Calu3 (cell line): ENCODE measurements at regions of chrX and their contacts with region 1.

Region 1: DNA sequence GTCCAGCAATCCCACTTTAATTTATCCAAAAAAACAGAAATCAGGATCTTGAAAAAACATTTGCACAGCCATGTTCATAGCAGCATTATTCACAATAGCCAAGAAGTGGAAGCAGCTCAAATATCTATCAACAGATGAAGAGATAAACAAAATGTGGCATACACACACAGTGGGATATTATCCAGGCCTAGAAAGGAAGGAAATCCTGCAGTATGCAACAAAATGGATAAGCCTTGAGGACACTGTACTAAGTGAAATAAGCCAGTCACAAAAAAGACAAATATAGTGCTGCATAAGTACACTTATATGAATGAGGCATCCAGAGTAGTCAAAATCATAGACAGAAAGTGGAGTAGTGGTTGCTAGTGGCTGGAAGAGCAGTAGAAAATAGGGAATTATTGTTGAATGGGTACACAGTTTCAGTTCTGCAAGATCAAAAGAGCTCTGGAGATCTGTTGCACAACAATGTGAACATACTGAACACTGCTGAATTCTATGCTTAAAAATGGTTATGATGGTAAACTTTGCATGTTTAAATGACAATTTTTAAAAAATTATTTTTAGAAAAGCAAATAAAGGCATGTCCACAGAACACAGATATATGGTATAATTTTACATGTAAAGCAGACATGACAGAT is 25.6 kb downstream of the CHM start:
- DNase-seq: no peak
- H3K4me3 Mint-ChIP-seq: no peak overlapping the region
- H3K27ac Mint-ChIP-seq: no peak overlapping the region
- H3K4me1 Mint-ChIP-seq: no peaks in the 10 kb centered on the region
- H3K27me3 Mint-ChIP-seq: no peaks in the 10 kb centered on the region
- CTCF ChIP-seq: no peak

Region 2: DNA sequence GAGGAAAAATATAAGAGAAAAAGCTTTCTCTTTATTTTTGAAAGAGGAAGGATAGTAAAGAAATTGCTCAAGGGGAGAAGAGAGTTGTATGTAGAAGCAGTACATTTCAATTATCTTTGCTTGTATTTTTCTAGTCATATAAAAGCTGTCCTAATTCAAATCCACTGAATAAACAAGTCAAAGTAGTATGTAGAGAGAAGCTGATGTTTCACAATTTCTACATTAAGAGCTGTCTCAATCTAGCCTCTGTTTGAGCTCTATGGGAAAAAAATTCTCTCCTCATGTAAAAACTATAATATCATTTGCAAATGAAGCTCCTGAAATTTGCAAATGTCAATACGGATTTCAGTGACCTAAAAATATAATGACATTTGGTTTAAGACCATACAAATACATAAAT is 27.0 kb before region 1 on chrX:
- CTCF ChIA-PET with region 1: interaction called, 10 read pairs
- intact Hi-C with region 1: no loop called
- DNase-seq: no peak
- H3K4me3 Mint-ChIP-seq: no peak overlapping the region
- H3K27ac Mint-ChIP-seq: no peak overlapping the region
- H3K4me1 Mint-ChIP-seq: peaks cover 24% of the 10 kb centered on the region
- H3K27me3 Mint-ChIP-seq: no peaks in the 10 kb centered on the region
- CTCF ChIP-seq: no peak

Region 3: DNA sequence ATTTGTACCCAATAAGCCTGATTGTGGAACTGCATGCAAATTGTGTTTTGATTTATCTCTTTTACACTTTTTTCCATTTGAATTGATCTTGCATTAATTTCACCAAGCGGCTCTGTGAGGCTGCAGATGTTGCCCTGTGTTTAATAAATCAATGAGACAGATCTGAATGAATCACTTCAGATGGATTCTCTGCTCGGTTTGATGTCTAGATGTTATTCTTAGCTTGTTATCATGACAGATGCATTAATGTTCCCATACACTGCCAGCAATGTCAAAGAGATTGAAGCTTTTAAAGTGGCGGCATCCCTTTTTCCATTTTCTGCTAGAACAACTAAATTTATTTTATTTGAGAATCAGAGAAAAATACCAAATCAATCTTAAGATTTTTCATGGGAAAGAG is 132.8 kb after region 1 on chrX:
- CTCF ChIA-PET with region 1: no interaction called
- intact Hi-C with region 1: no loop called
- DNase-seq: no peak
- H3K4me3 Mint-ChIP-seq: no peak overlapping the region
- H3K27ac Mint-ChIP-seq: no peak overlapping the region
- H3K4me1 Mint-ChIP-seq: no peaks in the 10 kb centered on the region
- H3K27me3 Mint-ChIP-seq: peaks cover under 1% of the 10 kb centered on the region
- CTCF ChIP-seq: no peak

Region 4: DNA sequence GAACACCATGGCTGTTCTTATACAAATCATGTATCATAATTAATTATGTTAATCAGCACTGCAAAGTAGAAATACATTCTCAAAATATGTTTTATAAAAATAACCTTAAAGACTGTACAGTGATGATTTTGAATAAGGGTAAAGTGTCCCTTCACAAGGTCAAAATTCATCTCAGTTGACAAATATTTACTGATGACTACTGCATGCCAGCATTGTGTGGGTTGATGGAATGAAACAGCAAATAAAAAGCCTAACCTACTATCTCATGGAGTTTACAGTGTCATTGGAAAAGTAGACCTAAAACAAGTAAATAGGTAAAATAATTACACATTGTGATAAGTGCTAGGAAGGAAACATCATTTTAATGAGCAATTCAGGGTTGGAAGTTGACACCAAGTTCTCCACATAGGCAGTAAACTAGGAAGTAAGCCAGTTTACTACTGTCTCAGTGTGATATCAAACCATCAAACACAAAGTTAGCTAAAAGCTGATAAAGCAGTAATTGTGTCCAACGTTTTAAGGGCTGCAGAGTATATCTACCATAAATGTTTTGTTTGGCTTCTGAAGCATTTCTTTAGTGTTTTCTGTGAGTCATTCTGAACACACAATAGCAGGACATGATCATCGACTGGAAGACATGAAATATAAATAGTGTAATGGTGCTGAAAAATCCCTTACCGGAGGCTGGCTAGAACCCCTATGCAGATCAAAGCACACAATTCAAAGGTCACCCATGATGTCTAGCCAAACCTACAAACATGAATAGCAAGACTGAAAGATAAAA is 348.3 kb after region 1 on chrX:
- CTCF ChIA-PET with region 1: no interaction called
- intact Hi-C with region 1: no loop called
- DNase-seq: no peak
- H3K4me3 Mint-ChIP-seq: no peak overlapping the region
- H3K27ac Mint-ChIP-seq: no peak overlapping the region
- H3K4me1 Mint-ChIP-seq: no peaks in the 10 kb centered on the region
- H3K27me3 Mint-ChIP-seq: no peaks in the 10 kb centered on the region
- CTCF ChIP-seq: no peak